AG04450 (cell line): ENCODE measurements at regions of chr16 and their contacts with region 1.

Region 1: DNA sequence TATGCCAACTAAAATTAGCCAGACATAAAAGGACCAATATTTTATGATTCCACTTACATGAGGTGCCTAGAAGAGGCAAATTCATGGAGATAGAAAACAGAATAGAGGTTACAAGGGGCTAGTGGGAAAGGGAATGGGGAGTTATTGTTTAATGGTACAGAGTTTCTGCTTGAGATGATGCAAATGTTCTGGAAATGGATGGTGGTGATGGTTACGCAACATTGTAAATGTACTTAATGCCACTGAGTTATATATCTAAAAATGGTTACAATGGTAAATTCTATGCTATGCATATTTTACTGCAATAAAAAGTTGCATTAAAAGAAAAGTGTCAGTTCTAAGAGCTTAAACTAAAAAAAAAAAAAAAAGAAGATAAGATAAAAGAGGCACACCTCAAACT is 17.9 kb downstream of the MT1X start:
- DNase-seq: no peak
- H3K4me3 ChIP-seq: no peak overlapping the region
- H3K27ac ChIP-seq: no peak overlapping the region
- H3K27me3 ChIP-seq: no peaks in the 10 kb centered on the region
- CTCF ChIP-seq: no peak

Region 2: GRCh38 chr16:56332464-56333079 is 367.6 kb before region 1 on chr16:
- CTCF ChIA-PET with region 1: interaction called, 14 read pairs
- POLR2A ChIA-PET with region 1: no interaction called
- DNase-seq: no peak
- H3K4me3 ChIP-seq: no peak overlapping the region
- H3K27ac ChIP-seq: no peak overlapping the region
- H3K27me3 ChIP-seq: no peaks in the 10 kb centered on the region
- CTCF ChIP-seq: peak; percentile 34

Region 3: DNA sequence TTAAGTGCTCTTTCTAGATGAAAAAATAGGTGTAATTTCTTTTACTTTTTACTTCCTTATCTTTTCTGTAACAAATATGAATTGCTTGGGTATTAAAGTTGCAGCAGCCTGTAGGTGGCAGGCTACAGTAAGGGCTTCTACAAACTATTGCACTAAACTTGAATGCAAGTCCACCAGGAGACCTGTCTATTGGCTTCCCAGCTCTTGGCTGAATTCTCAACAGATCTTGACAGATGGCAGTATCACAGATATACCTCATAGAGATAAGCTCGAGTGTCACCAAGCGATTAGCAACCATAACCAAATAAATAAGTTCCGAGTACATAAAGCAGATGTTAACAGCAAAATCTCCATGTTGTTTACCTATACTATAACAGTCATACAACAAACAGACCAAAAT is 186.2 kb before region 1 on chr16:
- CTCF ChIA-PET with region 1: interaction called, 59 read pairs
- POLR2A ChIA-PET with region 1: no interaction called
- DNase-seq: peak; percentile 29
- H3K4me3 ChIP-seq: no peak overlapping the region
- H3K27ac ChIP-seq: no peak overlapping the region
- H3K27me3 ChIP-seq: no peaks in the 10 kb centered on the region
- CTCF ChIP-seq: peak; percentile 81

Region 4: GRCh38 chr16:56600398-56600999 is 99.7 kb before region 1 on chr16:
- CTCF ChIA-PET with region 1: interaction called, 37 read pairs
- POLR2A ChIA-PET with region 1: no interaction called
- DNase-seq: no peak
- H3K4me3 ChIP-seq: no peak overlapping the region
- H3K27ac ChIP-seq: no peak overlapping the region
- H3K27me3 ChIP-seq: no peaks in the 10 kb centered on the region
- CTCF ChIP-seq: peak; percentile 78

Region 5: DNA sequence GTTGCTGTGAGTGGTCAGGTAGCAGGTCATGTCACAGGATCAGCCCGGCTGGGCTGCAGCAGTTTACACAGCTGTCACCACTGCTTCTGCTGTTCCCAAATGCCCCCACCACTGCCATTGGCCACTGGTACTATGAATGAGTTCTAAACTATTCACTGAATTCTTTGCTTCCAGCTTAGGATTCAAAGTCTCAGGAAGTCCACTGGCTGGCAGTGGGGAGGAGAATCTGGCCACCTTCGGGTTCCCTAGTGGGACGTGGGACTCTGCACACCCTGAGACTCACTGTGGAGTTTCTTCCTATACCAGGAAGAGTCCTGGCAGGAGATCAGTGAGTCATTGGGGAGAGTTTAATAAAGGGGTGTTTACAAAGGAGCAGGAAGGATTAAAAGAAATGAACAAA is 11.0 kb before region 1 on chr16:
- CTCF ChIA-PET with region 1: interaction called, 10 read pairs
- POLR2A ChIA-PET with region 1: no interaction called
- DNase-seq: no peak
- H3K4me3 ChIP-seq: no peak overlapping the region
- H3K27ac ChIP-seq: no peak overlapping the region
- H3K27me3 ChIP-seq: no peaks in the 10 kb centered on the region
- CTCF ChIP-seq: no peak

Region 6: GRCh38 chr16:57648590-57649442 is 948.6 kb after region 1 on chr16:
- CTCF ChIA-PET with region 1: no interaction called
- POLR2A ChIA-PET with region 1: no interaction called
- DNase-seq: peak; percentile 34
- H3K4me3 ChIP-seq: no peak overlapping the region
- H3K27ac ChIP-seq: no peak overlapping the region
- H3K27me3 ChIP-seq: no peaks in the 10 kb centered on the region
- CTCF ChIP-seq: peak; percentile 100